ENCODE measurements at regions of chr5 and their contacts with region 1.

Region 1: DNA sequence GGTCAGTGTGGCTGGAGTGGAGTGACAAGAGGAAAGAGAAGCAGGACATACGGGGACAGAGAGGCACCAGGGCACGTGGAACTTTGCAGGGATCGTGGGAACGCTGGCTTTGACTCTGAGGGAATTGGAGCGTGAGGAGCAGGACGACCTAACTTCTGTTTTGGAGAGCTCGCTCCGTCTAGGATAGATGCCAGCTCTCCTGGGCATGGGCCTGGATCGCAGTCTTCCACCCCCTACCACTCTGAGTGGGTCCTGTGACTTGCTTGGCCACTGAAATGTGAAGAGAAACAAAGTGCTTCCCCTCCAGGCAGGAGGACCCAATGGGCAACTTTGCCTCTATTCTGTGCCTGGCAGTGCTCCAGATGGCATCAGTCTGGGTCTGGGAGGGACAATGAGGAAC is 8.7 kb upstream of the SH3PXD2B start:
- DNase-seq: no peak
- H3K4me3 Mint-ChIP-seq: no peak overlapping the region
- H3K27ac Mint-ChIP-seq: no peak overlapping the region
- H3K4me1 Mint-ChIP-seq: no peaks in the 10 kb centered on the region
- H3K27me3 Mint-ChIP-seq: peaks cover 2% of the 10 kb centered on the region
- CTCF ChIP-seq: no peak

Region 2: DNA sequence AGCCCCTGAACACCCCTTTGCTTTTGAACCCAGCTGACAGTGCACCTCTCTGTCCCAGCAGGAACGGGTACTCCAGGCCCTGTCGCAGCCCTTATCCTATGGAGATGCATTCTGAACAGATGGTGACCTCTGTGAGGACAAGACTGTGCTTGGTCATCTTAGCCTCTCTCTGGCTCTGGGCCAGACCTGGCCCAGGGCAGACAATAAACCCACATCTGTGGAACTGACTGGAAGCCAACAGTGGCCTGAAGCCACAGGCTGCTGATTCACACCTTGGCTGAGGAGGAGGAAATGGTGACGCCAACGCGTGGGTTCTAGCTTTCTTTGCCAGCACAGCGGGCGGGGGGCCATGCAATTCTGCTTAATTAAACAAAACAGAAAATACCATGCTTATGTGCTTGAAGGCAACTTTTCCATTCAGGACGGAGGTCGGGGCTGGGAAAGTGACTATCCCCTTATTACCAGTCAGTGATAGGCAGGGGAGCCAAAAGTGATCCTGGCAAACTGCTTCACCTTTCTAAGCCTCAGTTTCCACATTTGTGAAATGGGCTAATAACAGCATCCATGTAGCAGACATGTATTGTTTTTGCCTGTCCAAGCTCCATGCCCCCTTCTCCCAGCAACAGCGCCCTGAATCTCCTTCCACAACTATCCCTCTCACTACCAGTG is 19.5 kb before region 1 on chr5:
- CTCF ChIA-PET with region 1: interaction called, 13 read pairs
- POLR2A ChIA-PET with region 1: no interaction called
- intact Hi-C with region 1: no loop called
- DNase-seq: peak; percentile 100
- H3K4me3 Mint-ChIP-seq: peak overlapping the region; percentile 28
- H3K27ac Mint-ChIP-seq: peak overlapping the region; percentile 46
- H3K4me1 Mint-ChIP-seq: peaks cover 26% of the 10 kb centered on the region
- H3K27me3 Mint-ChIP-seq: no peaks in the 10 kb centered on the region
- CTCF ChIP-seq: no peak

Region 3: DNA sequence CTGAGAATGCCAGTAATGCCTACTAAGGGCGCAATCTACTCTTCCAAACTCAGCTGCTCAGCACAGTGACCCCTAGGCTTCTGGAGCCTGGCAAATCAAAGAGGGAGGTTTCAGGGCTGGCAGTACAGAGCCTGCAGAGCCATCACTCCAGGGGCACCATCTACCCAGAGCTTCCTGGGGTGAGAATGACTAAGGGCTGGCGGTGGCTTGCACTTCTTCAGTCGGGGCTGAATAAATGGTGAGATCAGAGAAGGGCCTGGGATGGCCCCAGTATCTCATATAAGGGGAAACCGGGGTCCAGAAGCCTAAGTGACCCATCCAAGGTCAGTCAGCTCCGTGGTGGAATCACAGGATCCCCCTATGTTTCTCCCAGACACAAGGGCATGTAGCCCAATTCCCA is 14.0 kb before region 1 on chr5:
- CTCF ChIA-PET with region 1: interaction called, 25 read pairs
- POLR2A ChIA-PET with region 1: interaction called, 6 read pairs
- intact Hi-C with region 1: no loop called
- DNase-seq: no peak
- H3K4me3 Mint-ChIP-seq: no peak overlapping the region
- H3K27ac Mint-ChIP-seq: no peak overlapping the region
- H3K4me1 Mint-ChIP-seq: peaks cover 41% of the 10 kb centered on the region
- H3K27me3 Mint-ChIP-seq: no peaks in the 10 kb centered on the region
- CTCF ChIP-seq: no peak

Region 4: GRCh38 chr5:172497591-172498255 is 34.7 kb after region 1 on chr5:
- CTCF ChIA-PET with region 1: no interaction called
- POLR2A ChIA-PET with region 1: no interaction called
- intact Hi-C with region 1: no loop called
- DNase-seq: no peak
- H3K4me3 Mint-ChIP-seq: no peak overlapping the region
- H3K27ac Mint-ChIP-seq: no peak overlapping the region
- H3K4me1 Mint-ChIP-seq: peaks cover 2% of the 10 kb centered on the region
- H3K27me3 Mint-ChIP-seq: peaks cover 19% of the 10 kb centered on the region
- CTCF ChIP-seq: no peak